ENCODE measurements at regions of chr9 and their contacts with region 1.

Region 1: DNA sequence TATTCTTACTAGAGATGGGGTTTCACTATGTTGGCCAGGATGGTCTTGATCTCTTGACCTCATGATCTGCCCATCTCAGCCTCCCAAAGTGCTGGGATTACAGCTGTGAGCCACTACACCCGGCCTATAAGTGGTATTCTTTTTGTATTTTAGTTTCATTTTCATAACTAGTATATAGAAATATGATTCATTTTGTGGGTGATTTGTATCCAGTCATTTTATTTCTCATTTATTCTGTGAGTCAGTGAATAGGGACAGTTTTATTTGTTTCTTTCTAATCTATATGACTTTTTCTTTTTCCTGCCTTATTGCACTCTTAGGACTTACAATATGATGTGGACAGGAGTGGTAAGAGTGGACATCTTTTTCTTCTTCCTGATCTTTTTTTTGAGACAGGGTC is 112.9 kb downstream of the AOPEP start:
- DNase-seq: peak; percentile 25
- ATAC-seq: peak; percentile 93
- H3K4me3 Mint-ChIP-seq: no peak overlapping the region
- H3K27ac Mint-ChIP-seq: peak overlapping the region; percentile 33
- H3K4me1 Mint-ChIP-seq: peaks cover 19% of the 10 kb centered on the region
- H3K27me3 Mint-ChIP-seq: no peaks in the 10 kb centered on the region

Region 2: GRCh38 chr9:94668418-94668932 is 170.9 kb before region 1 on chr9:
- CTCF ChIA-PET with region 1: no interaction called
- POLR2A ChIA-PET with region 1: no interaction called
- intact Hi-C with region 1: no loop called
- DNase-seq: no peak
- ATAC-seq: no peak
- H3K4me3 Mint-ChIP-seq: peak overlapping the region; percentile 71
- H3K27ac Mint-ChIP-seq: no peak overlapping the region
- H3K4me1 Mint-ChIP-seq: peaks cover 11% of the 10 kb centered on the region
- H3K27me3 Mint-ChIP-seq: peaks cover 4% of the 10 kb centered on the region

Region 3: DNA sequence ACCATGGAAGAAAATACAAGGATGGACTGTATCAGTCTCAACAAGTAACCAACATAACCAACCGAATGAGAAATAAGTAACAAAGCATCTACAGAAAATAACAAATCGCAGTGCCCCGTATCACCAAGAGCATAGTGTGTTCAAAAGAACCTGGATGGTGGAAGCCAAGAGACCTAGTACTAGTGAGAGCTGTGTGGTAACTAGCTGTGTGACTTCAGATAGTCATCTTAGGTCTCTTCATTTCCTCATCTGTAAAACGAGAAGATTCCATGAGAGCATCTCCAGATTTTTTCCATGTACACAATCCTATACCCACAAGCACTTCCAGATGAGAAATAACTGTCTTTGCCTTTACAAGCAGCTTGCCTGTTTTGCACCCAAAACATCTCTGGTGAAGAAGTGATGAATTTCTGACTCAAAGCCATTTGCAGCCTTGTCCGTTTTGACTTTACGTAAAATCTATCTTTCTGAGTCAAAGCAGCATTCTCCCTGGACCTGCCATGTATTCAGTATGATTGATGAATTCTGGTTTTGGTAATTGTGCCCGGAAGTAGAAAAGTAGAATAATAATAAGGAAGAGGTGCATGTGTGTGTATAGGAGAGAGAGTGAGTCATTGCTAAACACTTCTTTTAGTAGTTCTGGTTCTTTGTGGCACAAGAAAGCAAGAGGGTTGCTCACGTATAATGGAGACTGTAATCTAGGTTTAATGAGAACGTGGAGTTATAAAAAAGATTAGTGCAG is 71.9 kb before region 1 on chr9:
- CTCF ChIA-PET with region 1: no interaction called
- POLR2A ChIA-PET with region 1: no interaction called
- intact Hi-C with region 1: loop called in 1 of 2 experiments (anchors 2 kb)
- DNase-seq: no peak
- ATAC-seq: peak; percentile 71
- H3K4me3 Mint-ChIP-seq: no peak overlapping the region
- H3K27ac Mint-ChIP-seq: no peak overlapping the region
- H3K4me1 Mint-ChIP-seq: peaks cover 20% of the 10 kb centered on the region
- H3K27me3 Mint-ChIP-seq: no peaks in the 10 kb centered on the region

Region 4: GRCh38 chr9:94780516-94780950 is 58.9 kb before region 1 on chr9:
- CTCF ChIA-PET with region 1: no interaction called
- POLR2A ChIA-PET with region 1: no interaction called
- intact Hi-C with region 1: no loop called
- DNase-seq: peak; percentile 67
- ATAC-seq: peak; percentile 91
- H3K4me3 Mint-ChIP-seq: no peak overlapping the region
- H3K27ac Mint-ChIP-seq: no peak overlapping the region
- H3K4me1 Mint-ChIP-seq: peaks cover 8% of the 10 kb centered on the region
- H3K27me3 Mint-ChIP-seq: no peaks in the 10 kb centered on the region

Region 5: GRCh38 chr9:94860968-94861871 is 21.8 kb after region 1 on chr9:
- CTCF ChIA-PET with region 1: no interaction called
- POLR2A ChIA-PET with region 1: no interaction called
- intact Hi-C with region 1: loop called in 1 of 2 experiments (anchors 1 kb)
- DNase-seq: peak; percentile 80
- ATAC-seq: peak; percentile 90
- H3K4me3 Mint-ChIP-seq: peak overlapping the region; percentile 6
- H3K27ac Mint-ChIP-seq: peak overlapping the region; percentile 66
- H3K4me1 Mint-ChIP-seq: peaks cover 37% of the 10 kb centered on the region
- H3K27me3 Mint-ChIP-seq: peaks cover 3% of the 10 kb centered on the region

Region 6: DNA sequence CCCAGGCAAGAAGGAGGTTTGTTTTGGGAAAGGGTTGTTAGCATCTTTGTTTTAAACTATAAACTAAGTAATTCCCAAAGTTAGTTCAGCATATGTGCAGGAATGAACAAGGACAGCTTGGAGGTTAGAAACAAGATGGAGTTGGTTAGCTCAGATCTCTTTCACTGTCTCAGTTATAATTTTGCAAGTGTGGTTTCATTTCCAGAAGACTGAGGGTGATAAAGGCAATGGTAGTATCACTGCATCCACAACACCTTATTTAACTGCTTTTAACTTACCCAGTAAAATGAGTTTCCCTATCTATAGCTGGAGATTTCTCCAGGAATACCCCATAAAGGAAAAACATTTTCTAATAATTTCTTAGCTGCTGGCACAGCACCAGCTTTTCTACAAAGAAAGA is 39.8 kb after region 1 on chr9:
- CTCF ChIA-PET with region 1: interaction called, 3 read pairs
- POLR2A ChIA-PET with region 1: no interaction called
- intact Hi-C with region 1: loop called in 1 of 2 experiments (anchors 2 kb)
- DNase-seq: no peak
- ATAC-seq: peak; percentile 39
- H3K4me3 Mint-ChIP-seq: no peak overlapping the region
- H3K27ac Mint-ChIP-seq: no peak overlapping the region
- H3K4me1 Mint-ChIP-seq: peaks cover 25% of the 10 kb centered on the region
- H3K27me3 Mint-ChIP-seq: no peaks in the 10 kb centered on the region

Region 7: GRCh38 chr9:94900222-94901018 is 61.0 kb after region 1 on chr9:
- CTCF ChIA-PET with region 1: no interaction called
- POLR2A ChIA-PET with region 1: no interaction called
- intact Hi-C with region 1: loop called in 1 of 2 experiments (anchors 2 kb)
- DNase-seq: no peak
- ATAC-seq: peak; percentile 83
- H3K4me3 Mint-ChIP-seq: no peak overlapping the region
- H3K27ac Mint-ChIP-seq: peak overlapping the region; percentile 56
- H3K4me1 Mint-ChIP-seq: peaks cover 14% of the 10 kb centered on the region
- H3K27me3 Mint-ChIP-seq: no peaks in the 10 kb centered on the region

Measured in activated CD4-positive, alpha-beta T cell treated with anti-CD3 and anti-CD28 coated beads for 36 hours (primary cell).